Activated CD8-positive, alpha-beta T cell treated with anti-CD3 and anti-CD28 coated beads, Interleukin-2, amount 10 ng/mL, durations not matched to agents 7 days and 5 days (primary cell): ENCODE measurements at regions of chr1 and their contacts with region 1.

Region 1: DNA sequence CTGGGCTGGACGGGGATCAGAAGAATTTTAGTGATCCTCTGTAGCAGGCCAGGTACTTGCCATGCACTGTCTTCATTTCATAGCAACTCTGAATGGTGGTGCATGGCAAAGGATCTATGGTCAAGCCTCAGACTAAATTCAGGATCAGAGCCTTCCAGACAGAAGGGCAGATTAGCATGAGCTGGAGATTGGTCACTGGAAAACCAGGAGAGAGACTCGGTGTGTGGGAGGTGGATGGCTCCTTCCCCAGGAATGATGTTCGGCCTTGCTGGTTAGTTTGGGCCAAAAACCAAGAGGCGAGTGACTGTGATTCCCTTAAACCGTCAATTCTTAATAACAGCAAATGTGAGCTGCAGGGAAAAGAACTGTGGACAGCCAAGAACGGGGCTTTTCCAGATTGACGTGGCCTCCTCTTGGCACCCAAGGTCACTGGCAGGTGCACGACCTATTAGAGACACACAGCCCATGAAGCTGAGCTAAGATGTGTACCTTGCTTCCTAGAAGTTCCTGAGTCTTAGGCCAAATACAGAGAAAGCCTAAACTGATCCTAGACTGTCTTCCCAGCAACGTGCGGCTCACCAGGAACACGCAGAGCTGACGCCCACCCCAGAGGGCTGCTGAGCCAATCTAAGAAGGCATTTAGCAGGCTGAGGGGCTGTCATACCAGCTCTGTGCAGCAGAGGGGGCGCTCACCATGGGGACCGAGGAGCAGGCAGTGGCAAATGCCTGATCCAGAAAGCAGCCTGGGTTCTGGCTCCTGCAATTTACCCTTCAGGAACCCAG is 18.5 kb downstream of the ALDH4A1 start:
- DNase-seq: peak; percentile 76
- ATAC-seq: peak; percentile 69
- H3K4me3 Mint-ChIP-seq: no peak overlapping the region
- H3K27ac Mint-ChIP-seq: no peak overlapping the region
- H3K4me1 Mint-ChIP-seq: no peaks in the 10 kb centered on the region
- H3K27me3 Mint-ChIP-seq: no peaks in the 10 kb centered on the region

Region 2: DNA sequence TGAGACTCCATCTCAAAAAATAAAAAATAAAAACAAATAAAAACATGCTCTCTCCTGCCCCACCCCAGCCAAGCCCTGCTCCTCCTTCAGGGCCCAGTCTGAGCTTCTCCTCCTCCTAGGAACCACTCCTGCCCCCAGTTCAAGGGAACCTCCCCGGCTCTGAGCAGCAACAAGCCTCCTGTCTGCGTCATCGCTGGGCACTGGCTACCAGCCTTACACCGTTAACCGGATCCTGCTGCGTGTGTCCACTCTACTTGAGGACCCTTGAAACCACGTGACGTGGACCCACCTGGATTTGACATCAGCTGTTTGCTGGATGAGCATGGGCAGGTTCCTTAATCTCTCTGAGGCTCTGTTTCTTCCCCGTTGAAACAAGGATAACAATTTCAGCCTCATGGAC is 22.7 kb before region 1 on chr1:
- CTCF ChIA-PET with region 1: no interaction called
- POLR2A ChIA-PET with region 1: no interaction called
- DNase-seq: no peak
- ATAC-seq: no peak
- H3K4me3 Mint-ChIP-seq: no peak overlapping the region
- H3K27ac Mint-ChIP-seq: no peak overlapping the region
- H3K4me1 Mint-ChIP-seq: no peaks in the 10 kb centered on the region
- H3K27me3 Mint-ChIP-seq: peaks cover 3% of the 10 kb centered on the region

Region 3: GRCh38 chr1:19074902-19075721 is 191.3 kb after region 1 on chr1:
- CTCF ChIA-PET with region 1: interaction called, 15 read pairs
- POLR2A ChIA-PET with region 1: no interaction called
- DNase-seq: no peak
- ATAC-seq: no peak
- H3K4me3 Mint-ChIP-seq: no peak overlapping the region
- H3K27ac Mint-ChIP-seq: peak overlapping the region; percentile 78
- H3K4me1 Mint-ChIP-seq: peaks cover 34% of the 10 kb centered on the region
- H3K27me3 Mint-ChIP-seq: peaks cover 6% of the 10 kb centered on the region

Region 4: DNA sequence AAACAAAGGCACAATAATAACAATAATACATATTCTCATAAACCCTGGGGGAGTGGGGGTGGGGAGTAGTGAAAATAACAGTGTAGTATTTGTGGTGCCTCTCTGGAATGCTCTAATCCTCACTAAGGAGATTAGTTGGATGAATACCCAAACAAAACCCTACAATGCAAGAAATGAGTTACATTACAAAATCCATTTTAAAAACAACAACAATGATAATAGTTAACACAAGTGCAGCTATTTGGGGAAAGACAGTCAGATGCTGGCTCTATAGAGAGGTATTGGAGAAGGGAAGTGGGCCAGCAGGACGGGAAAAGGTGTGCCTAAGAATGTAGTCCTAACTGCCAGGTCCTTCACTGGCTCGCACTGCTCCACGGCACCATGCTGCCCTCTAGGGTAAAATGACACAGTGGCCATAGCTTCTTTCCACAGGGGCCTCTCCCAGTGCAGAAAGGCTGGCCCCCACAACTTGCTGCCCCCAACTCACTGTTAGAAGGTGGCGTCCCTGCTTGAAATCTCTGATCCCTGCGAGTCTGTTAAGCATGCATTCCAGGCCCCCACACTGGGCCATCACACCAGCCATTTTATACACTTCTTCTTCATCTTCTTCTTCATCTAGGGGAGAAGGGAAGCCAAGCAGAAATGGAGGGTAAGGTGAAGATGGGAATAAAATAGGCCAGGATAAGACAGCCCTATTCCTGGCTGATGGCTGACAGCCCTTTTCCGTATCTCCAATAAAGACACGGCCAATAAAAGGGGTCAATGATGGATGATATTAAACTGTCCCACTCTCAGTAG is 212.4 kb after region 1 on chr1:
- CTCF ChIA-PET with region 1: interaction called, 10 read pairs
- POLR2A ChIA-PET with region 1: no interaction called
- DNase-seq: peak; percentile 32
- ATAC-seq: no peak
- H3K4me3 Mint-ChIP-seq: no peak overlapping the region
- H3K27ac Mint-ChIP-seq: no peak overlapping the region
- H3K4me1 Mint-ChIP-seq: no peaks in the 10 kb centered on the region
- H3K27me3 Mint-ChIP-seq: no peaks in the 10 kb centered on the region

Region 5: DNA sequence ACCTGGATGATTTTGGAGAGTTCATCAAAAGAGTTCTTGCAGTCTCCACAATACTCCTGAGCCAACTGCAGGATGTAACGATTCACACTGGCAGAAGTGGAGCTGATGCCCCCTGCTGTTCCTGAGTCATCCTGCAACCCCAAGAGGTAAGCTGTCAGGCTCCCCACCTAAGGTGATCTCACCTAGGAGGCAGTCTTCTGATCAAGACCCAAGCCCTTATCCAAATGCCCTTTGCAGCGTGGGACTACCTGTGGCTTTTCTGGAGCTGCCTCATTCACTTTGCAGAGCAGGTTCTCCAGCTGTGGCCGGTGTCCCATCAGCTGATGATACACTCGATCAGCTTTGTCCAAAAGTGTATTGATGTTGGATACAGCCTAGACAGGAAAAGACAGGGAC is 229.9 kb after region 1 on chr1:
- CTCF ChIA-PET with region 1: interaction called, 18 read pairs
- POLR2A ChIA-PET with region 1: no interaction called
- DNase-seq: peak; percentile 68
- ATAC-seq: peak; percentile 69
- H3K4me3 Mint-ChIP-seq: no peak overlapping the region
- H3K27ac Mint-ChIP-seq: no peak overlapping the region
- H3K4me1 Mint-ChIP-seq: no peaks in the 10 kb centered on the region
- H3K27me3 Mint-ChIP-seq: no peaks in the 10 kb centered on the region

Region 6: DNA sequence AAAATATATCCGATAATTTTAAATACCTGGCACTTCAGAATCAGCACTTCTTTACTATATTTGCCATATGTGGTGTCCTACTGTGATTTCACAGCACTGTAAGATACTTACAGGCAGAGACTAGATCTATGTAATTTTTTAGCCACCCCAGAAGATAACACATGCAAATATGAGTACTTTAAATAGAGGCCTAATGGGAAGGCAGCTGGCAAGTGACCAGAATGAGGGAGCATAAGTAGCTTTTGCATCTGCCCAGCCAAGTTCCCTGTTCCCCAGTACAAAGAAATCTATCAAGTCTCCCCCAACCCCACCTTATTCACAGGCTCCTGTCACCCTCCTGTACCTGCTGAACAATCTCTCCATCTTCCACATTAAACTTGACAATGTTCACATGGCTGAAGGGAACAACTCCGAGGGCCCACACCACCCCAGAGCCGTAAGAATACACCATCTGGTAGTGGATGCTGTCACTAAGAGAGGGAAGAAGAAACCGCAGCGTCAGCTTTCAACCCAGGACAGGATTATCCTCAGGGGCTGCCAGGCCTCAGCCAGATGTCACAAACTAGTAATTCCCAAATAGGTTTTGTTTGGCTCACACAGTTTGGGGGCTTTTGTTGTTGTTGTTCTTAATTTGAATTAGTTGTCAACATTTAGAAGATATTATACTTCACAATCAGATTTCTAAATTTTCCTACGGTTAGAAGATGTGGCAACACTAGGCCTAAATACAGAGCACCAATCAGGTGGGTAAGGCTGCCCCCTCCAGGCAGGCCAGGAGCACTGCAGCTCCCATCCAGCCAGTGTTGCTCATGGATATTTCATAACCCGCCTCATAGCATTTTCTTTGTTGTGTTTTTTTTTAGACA is 357.1 kb after region 1 on chr1:
- CTCF ChIA-PET with region 1: interaction called, 15 read pairs
- POLR2A ChIA-PET with region 1: no interaction called
- DNase-seq: peak; percentile 72
- ATAC-seq: peak; percentile 85
- H3K4me3 Mint-ChIP-seq: no peak overlapping the region
- H3K27ac Mint-ChIP-seq: peak overlapping the region; percentile 30
- H3K4me1 Mint-ChIP-seq: no peaks in the 10 kb centered on the region
- H3K27me3 Mint-ChIP-seq: no peaks in the 10 kb centered on the region